T-cell (primary cell): ENCODE measurements at regions of chr3 and their contacts with region 1.

Region 1: GRCh38 chr3:141690431-141691072 is 47.5 kb upstream of the RNF7 start:
- DNase-seq: no peak
- ATAC-seq: no peak
- H3K4me3 ChIP-seq: no peak overlapping the region
- H3K4me3 Mint-ChIP-seq: no peak overlapping the region
- H3K27ac ChIP-seq: no peak overlapping the region
- H3K27ac Mint-ChIP-seq: no peak overlapping the region
- H3K4me1 ChIP-seq: peaks cover 2 to 6% of the 10 kb centered on the region in 2 experiments
- H3K4me1 Mint-ChIP-seq: peaks cover 14 to 18% (median 18%) of the 10 kb centered on the region in 3 donors
- H3K27me3 ChIP-seq: no peaks in the 10 kb centered on the region
- H3K27me3 Mint-ChIP-seq: no peaks in the 10 kb centered on the region

Region 2: DNA sequence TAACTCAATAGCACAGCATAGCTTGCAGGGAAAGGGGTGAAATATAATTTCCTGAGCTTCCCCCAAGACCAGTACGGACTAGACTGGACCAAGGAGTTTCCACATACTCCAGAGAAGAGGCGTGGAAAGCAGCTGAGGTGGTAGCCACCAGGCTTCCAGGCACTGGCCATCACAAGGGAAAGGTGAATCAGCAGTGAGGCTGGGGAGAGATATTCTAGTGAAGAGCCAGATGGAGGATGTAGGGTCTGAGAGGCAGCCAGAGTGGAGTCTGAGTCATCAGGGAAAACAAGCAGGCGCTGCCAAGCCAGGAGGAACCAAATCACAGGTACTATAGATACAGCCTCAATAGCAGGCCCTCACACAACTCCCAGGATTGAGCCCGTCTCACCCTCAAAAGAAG is 213.3 kb before region 1 on chr3:
- CTCF ChIA-PET with region 1: no interaction called
- POLR2A ChIA-PET with region 1: no interaction called
- DNase-seq: no peak
- ATAC-seq: peak in 1 of 4 experiments; percentile 26
- H3K4me3 ChIP-seq: no peak overlapping the region
- H3K4me3 Mint-ChIP-seq: no peak overlapping the region
- H3K27ac ChIP-seq: no peak overlapping the region
- H3K27ac Mint-ChIP-seq: no peak overlapping the region
- H3K4me1 ChIP-seq: peaks cover 7 to 21% of the 10 kb centered on the region in 2 experiments
- H3K4me1 Mint-ChIP-seq: peaks cover 36 to 43% (median 38%) of the 10 kb centered on the region in 3 donors
- H3K27me3 ChIP-seq: no peaks in the 10 kb centered on the region
- H3K27me3 Mint-ChIP-seq: no peaks in the 10 kb centered on the region

Region 3: DNA sequence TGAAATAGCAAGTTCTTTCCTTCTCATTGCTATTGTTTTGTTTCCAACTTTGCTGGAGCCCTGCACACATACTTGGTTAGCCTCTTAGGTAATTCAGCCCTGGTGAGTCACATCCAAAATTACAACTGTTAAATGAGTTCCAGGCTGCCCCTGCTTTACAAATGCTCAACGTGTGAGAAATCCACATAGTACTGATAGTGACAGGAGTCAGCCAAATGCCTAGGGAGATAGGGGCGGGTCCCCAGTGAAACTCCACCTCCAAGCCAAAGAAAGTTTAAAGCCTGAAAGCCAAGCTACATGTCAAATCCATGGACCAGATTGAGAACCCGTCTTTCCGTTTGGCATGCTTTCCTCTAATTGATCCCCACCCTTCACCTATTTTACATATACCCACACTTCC is 33.7 kb before region 1 on chr3:
- CTCF ChIA-PET with region 1: no interaction called
- POLR2A ChIA-PET with region 1: interaction called in 1 of 2 experiments, 10 read pairs
- DNase-seq: no peak
- ATAC-seq: no peak
- H3K4me3 ChIP-seq: no peak overlapping the region
- H3K4me3 Mint-ChIP-seq: no peak overlapping the region
- H3K27ac ChIP-seq: no peak overlapping the region
- H3K27ac Mint-ChIP-seq: no peak overlapping the region
- H3K4me1 ChIP-seq: peaks cover 2 to 12% of the 10 kb centered on the region in 2 experiments
- H3K4me1 Mint-ChIP-seq: peaks cover 7 to 8% (median 7%) of the 10 kb centered on the region in 3 donors
- H3K27me3 ChIP-seq: peaks cover 10 to 43% of the 10 kb centered on the region in 2 experiments
- H3K27me3 Mint-ChIP-seq: peaks cover 37 to 48% of the 10 kb centered on the region in 2 donors

Region 4: DNA sequence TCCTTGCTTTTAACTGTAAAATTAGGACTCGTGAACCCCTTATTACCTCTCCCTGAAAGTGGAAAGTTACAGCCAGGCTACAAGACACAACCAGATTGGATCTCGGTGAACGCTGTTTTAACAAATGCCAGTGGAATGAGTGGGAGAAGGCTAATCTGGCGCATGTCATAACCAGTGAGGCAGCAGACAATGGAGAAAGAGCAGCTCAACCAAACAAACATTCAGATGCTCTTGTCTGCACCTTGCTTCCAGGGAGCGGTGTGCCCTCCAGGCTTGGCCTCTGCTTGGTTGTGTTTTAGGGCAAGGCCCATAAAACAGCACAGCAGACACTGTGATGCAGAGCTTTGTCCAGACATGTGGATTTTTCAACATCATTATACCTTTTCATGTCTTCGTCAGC is 140.0 kb after region 1 on chr3:
- CTCF ChIA-PET with region 1: no interaction called
- POLR2A ChIA-PET with region 1: no interaction called
- DNase-seq: no peak
- ATAC-seq: no peak
- H3K4me3 ChIP-seq: no peak overlapping the region
- H3K4me3 Mint-ChIP-seq: no peak overlapping the region
- H3K27ac ChIP-seq: no peak overlapping the region
- H3K27ac Mint-ChIP-seq: no peak overlapping the region
- H3K4me1 ChIP-seq: no peaks in the 10 kb centered on the region
- H3K4me1 Mint-ChIP-seq: no peaks in the 10 kb centered on the region
- H3K27me3 ChIP-seq: peaks cover 0 to 5% of the 10 kb centered on the region in 2 experiments
- H3K27me3 Mint-ChIP-seq: no peaks in the 10 kb centered on the region

Region 5: DNA sequence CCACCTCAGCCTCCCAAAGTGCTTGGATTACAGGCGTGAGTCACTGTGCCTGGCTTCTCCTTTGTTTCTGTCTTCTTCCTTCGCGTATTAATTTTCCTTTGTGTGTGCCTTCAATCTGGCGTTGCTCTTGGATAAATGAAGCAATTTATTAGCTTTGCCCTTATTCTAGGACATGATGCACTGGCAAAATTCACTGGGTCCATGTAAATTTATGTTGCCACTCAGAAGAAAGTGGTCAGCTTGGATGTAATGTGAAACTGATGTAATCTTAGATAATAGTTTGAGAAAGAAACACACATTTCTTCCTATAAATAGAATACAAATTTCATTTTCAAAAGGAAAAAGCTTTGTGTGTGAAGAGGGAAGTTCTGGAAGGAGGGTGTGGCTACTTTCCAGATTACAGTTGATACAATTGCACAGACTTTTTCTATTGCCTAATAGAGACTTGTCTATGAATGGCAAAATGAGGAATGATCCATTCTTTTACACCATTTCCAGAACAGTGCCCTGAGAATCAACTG is 162.6 kb after region 1 on chr3:
- CTCF ChIA-PET with region 1: no interaction called
- POLR2A ChIA-PET with region 1: no interaction called
- DNase-seq: no peak
- ATAC-seq: no peak
- H3K4me3 ChIP-seq: no peak overlapping the region
- H3K4me3 Mint-ChIP-seq: no peak overlapping the region
- H3K27ac ChIP-seq: no peak overlapping the region
- H3K27ac Mint-ChIP-seq: no peak overlapping the region
- H3K4me1 ChIP-seq: no peaks in the 10 kb centered on the region
- H3K4me1 Mint-ChIP-seq: no peaks in the 10 kb centered on the region
- H3K27me3 ChIP-seq: peaks cover 0 to 8% of the 10 kb centered on the region in 2 experiments
- H3K27me3 Mint-ChIP-seq: peaks cover 0 to 7% of the 10 kb centered on the region in 2 donors